IMR-90 (cell line): ENCODE measurements at regions of chr5 and their contacts with region 1.

Region 1: DNA sequence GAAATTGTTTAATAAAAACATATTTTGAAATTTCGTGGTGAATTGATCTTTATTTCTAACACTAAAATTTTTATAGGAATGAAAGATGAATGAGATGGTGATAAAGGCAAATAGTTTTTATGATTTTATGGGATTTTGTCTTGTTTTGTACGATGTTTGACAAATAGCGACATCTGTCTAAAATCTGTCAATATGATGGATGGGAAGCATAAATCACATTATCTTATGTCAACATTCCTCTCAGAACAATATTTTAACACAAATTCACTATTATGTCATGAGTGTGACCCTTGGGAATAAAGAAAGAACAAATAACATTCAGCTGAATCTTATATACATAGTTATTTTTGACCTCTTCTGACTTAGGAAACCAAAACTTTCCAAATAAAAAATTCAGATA is 852.0 kb upstream of the CDH6 start:
- DNase-seq: no peak
- ATAC-seq: no peak
- H3K4me3 ChIP-seq: no peak overlapping the region
- H3K27ac ChIP-seq: no peak overlapping the region
- H3K4me1 ChIP-seq: no peaks in the 10 kb centered on the region
- H3K27me3 ChIP-seq: no peaks in the 10 kb centered on the region
- CTCF ChIP-seq: no peak
- POLR2A ChIP-seq: no peak
- RAD21 ChIP-seq: no peak

Region 2: DNA sequence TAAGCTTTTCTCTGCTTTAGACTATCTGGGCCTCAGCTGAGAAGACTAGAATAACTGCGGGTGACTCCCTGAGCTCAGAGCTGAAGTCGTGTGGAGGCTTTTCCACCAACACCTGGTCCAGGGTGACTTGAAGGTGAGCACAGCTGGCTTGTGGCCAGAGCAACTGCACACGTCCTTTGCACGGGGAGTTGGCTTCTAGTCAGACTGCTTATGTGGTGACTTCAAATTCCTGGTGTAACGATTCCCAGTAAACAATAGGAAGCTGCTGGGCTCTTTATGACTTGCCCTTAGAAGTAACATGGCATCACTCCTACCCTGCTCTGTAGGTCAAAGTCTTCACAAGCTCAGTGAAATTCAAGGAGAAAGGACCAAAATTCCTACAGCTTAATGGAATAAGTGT is 51.4 kb after region 1 on chr5:
- CTCF ChIA-PET with region 1: no interaction called
- POLR2A ChIA-PET with region 1: no interaction called
- dilution Hi-C with region 1: no loop called
- in situ Hi-C with region 1: no loop called
- intact Hi-C with region 1: loop called (anchors 2 kb)
- DNase-seq: no peak
- ATAC-seq: no peak
- H3K4me3 ChIP-seq: no peak overlapping the region
- H3K27ac ChIP-seq: no peak overlapping the region
- H3K4me1 ChIP-seq: no peaks in the 10 kb centered on the region
- H3K27me3 ChIP-seq: no peaks in the 10 kb centered on the region
- CTCF ChIP-seq: no peak
- POLR2A ChIP-seq: no peak
- RAD21 ChIP-seq: no peak